ENCODE measurements at regions of chr17 and their contacts with region 1.

Region 1: DNA sequence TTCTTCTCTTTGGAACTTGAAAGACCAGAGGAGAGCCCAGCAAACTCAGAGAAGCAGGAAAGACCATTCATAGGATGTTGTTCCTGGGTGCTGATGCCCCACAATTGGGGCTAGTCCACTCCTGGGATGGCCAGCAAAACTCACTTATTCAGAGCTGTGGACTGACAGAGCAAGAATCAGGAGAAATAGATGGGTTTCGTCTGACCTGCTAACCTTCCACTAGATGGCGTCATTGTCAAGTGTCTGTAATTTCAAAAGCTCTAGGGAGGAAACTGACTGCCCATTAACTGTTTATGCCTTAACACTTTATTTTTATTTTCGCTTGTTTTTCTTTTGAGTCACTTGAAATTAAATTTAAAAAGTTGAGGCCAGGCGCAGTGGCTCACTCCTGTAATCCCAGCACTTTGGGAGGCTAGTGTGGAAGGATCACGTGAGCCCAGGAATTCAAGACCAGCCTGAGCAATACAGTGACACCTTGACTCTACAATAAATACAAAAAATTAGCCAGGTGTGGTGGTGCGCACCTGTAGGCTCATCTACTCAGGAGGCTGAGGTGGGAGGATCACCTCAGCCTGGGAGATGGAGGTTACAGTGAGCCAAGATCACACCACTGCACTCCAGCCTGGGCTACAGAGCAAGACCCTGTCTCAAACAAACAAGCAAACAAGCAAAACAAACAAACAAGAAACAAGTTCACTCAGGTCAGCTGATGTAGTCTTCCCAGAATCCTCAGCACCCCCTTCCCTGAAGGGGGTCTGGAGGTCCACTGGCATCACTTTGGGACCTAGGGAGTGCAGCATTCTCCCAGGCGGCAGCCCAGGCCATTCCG is 28.6 kb upstream of the MILR1 start:
- DNase-seq: peak in 15 of 35 experiments; percentile 9 to 83 (median 23)
- ATAC-seq: peak; percentile 72 to 85 (median 84)
- H3K4me3 ChIP-seq: no peak overlapping the region
- H3K4me3 Mint-ChIP-seq: no peak overlapping the region
- H3K27ac ChIP-seq: no peak overlapping the region
- H3K27ac Mint-ChIP-seq: no peak overlapping the region
- H3K4me1 ChIP-seq: peaks cover 2 to 12% of the 10 kb centered on the region in 2 experiments
- H3K4me1 Mint-ChIP-seq: peaks cover 6 to 8% (median 6%) of the 10 kb centered on the region in 3 donors
- H3K27me3 ChIP-seq: no peaks in the 10 kb centered on the region
- H3K27me3 Mint-ChIP-seq: no peaks in the 10 kb centered on the region

Region 2: DNA sequence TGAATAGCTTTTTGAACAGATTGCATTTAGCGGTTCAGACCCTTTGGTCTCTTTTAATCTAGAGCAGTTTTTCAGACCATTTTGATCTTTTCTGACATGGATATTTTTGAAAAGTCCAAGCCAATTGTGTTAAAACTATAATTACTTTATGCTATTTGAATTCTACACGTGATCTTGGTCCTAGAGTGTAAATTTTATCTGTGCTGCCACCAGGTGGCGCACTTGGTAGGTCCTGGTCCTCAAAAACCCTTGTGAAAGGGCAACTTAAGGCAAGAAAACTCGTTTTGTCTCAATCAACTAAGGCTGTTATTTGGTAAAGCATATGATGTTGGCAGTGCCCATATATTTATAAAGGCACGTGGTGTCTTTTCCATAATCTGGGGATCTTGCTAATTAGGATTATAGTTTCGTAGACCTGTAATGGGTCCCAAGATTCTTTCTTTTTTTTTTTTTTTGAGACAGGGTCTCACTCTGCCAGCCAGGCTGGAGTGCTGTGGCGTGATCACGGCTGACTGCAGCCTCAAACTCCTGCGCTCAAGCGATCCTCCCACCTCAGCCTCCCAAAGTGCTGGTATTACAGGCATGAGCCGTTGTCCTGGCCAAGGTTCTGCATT is 113.4 kb before region 1 on chr17:
- CTCF ChIA-PET with region 1: interaction called, 7 to 18 read pairs
- POLR2A ChIA-PET with region 1: no interaction called
- DNase-seq: peak; percentile 32 to 86 (median 60)
- ATAC-seq: peak in 3 of 4 experiments; percentile 51 to 69 (median 55)
- H3K4me3 ChIP-seq: no peak overlapping the region
- H3K4me3 Mint-ChIP-seq: no peak overlapping the region
- H3K27ac ChIP-seq: no peak overlapping the region
- H3K27ac Mint-ChIP-seq: no peak overlapping the region
- H3K4me1 ChIP-seq: no peaks in the 10 kb centered on the region
- H3K4me1 Mint-ChIP-seq: peaks cover 0 to 2% (median 0%) of the 10 kb centered on the region in 3 donors
- H3K27me3 ChIP-seq: peaks cover 0 to 3% of the 10 kb centered on the region in 2 experiments
- H3K27me3 Mint-ChIP-seq: no peaks in the 10 kb centered on the region

Region 3: GRCh38 chr17:64320613-64321553 is 99.5 kb before region 1 on chr17:
- CTCF ChIA-PET with region 1: interaction called, 6 to 21 read pairs
- POLR2A ChIA-PET with region 1: interaction called in 1 of 2 experiments, 6 read pairs
- DNase-seq: peak in 31 of 35 experiments; percentile 12 to 79 (median 39)
- ATAC-seq: peak; percentile 43 to 70 (median 58)
- H3K4me3 ChIP-seq: no peak overlapping the region
- H3K4me3 Mint-ChIP-seq: peak overlapping the region in 2 of 3 donors; percentile 5 to 39
- H3K27ac ChIP-seq: no peak overlapping the region
- H3K27ac Mint-ChIP-seq: peak overlapping the region; percentile 69 to 71
- H3K4me1 ChIP-seq: peaks cover 0 to 11% of the 10 kb centered on the region in 2 experiments
- H3K4me1 Mint-ChIP-seq: peaks cover 14 to 35% (median 19%) of the 10 kb centered on the region in 3 donors
- H3K27me3 ChIP-seq: no peaks in the 10 kb centered on the region
- H3K27me3 Mint-ChIP-seq: peaks cover 0 to 12% of the 10 kb centered on the region in 2 donors

Region 4: GRCh38 chr17:64491034-64491859 is 70.9 kb after region 1 on chr17:
- CTCF ChIA-PET with region 1: interaction called, 13 to 77 read pairs
- POLR2A ChIA-PET with region 1: interaction called in 1 of 2 experiments, 3 read pairs
- DNase-seq: peak in 28 of 35 experiments; percentile 11 to 72 (median 38)
- ATAC-seq: peak in 3 of 4 experiments; percentile 36 to 67 (median 63)
- H3K4me3 ChIP-seq: no peak overlapping the region
- H3K4me3 Mint-ChIP-seq: no peak overlapping the region
- H3K27ac ChIP-seq: no peak overlapping the region
- H3K27ac Mint-ChIP-seq: no peak overlapping the region
- H3K4me1 ChIP-seq: peaks cover 22 to 26% of the 10 kb centered on the region in 2 experiments
- H3K4me1 Mint-ChIP-seq: peaks cover 32 to 40% (median 40%) of the 10 kb centered on the region in 3 donors
- H3K27me3 ChIP-seq: no peaks in the 10 kb centered on the region
- H3K27me3 Mint-ChIP-seq: no peaks in the 10 kb centered on the region

Region 5: DNA sequence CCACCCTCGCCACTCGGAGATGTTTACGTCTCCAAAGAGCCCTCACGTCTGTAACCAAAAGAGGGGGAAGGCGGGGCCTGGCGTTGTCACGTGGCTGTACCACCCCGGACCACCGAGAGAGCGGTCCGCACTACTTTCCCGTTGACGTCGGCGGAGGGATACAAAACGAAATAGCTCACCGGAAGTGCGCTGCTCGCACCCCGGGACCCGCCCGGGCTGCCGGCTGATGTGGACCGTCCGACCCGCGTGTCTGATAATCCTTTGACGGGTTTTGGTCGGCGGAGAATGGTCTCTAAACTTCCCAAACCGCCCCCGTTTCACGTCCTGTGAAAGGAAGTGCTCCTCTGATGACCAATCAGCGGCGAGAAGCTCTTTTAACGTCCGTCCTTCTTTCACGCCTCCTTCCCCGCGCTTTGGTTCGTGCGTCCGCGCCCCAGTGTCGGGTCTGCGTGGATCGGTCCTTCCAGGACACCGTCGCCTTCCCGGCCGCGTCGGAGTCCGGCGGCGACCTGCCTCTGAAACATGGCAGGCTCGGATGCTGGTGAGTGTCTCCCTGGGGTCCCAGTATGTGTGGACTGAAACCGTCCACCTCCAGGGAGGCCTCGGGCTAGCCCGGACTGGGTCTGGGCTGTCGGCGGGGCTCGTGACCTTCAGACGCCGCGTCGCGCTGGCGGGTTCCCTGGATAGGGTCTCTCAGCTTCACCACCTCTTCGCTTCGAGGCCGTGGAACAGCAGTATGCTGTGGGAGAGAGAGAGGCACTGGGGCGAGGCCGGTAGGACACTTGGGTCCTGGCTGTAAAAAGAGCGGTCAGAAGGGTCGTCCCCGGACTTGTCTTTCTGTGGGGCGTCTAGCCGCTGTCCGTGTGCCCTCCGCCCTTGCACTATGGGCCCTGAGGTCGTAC is 86.5 kb after region 1 on chr17 and contains the start of gene CEP95:
- CTCF ChIA-PET with region 1: interaction called, 6 to 24 read pairs
- POLR2A ChIA-PET with region 1: interaction called in 1 of 2 experiments, 4 read pairs
- DNase-seq: peak in 34 of 35 experiments; percentile 90 to 98 (median 95)
- ATAC-seq: peak; percentile 63 to 76 (median 69)
- H3K4me3 ChIP-seq: peak within 1 kb of the TSS; percentile 91 to 99
- H3K4me3 Mint-ChIP-seq: peak within 1 kb of the TSS; percentile 97 to 100 (median 100)
- H3K27ac ChIP-seq: peak within 1 kb of the TSS; percentile 99
- H3K27ac Mint-ChIP-seq: peak within 1 kb of the TSS; percentile 99 to 100
- H3K4me1 ChIP-seq: peaks cover 19 to 34% of the 10 kb centered on the region in 2 experiments
- H3K4me1 Mint-ChIP-seq: peaks cover 62 to 72% (median 62%) of the 10 kb centered on the region in 3 donors
- H3K27me3 ChIP-seq: no peaks in the 10 kb centered on the region
- H3K27me3 Mint-ChIP-seq: no peaks in the 10 kb centered on the region
- total RNA-seq, gene CEP95: 77.0 to 168 (median 91.9) TPM

Measured in T-cell (primary cell).